ENCODE measurements at regions of chr5 and their contacts with region 1.

Region 1: GRCh38 chr5:148810823-148811222 is 15.6 kb upstream of the ADRB2 start:
- DNase-seq: no peak
- ATAC-seq: no peak
- H3K4me3 ChIP-seq: no peak overlapping the region
- H3K4me3 Mint-ChIP-seq: peak overlapping the region; percentile 80
- H3K27ac ChIP-seq: no peak overlapping the region
- H3K27ac Mint-ChIP-seq: peak overlapping the region; percentile 75
- H3K4me1 ChIP-seq: peaks cover 27% of the 10 kb centered on the region
- H3K4me1 Mint-ChIP-seq: peaks cover 47% of the 10 kb centered on the region
- H3K27me3 ChIP-seq: no peaks in the 10 kb centered on the region
- H3K27me3 Mint-ChIP-seq: no peaks in the 10 kb centered on the region
- CTCF ChIP-seq: no peak

Region 2: DNA sequence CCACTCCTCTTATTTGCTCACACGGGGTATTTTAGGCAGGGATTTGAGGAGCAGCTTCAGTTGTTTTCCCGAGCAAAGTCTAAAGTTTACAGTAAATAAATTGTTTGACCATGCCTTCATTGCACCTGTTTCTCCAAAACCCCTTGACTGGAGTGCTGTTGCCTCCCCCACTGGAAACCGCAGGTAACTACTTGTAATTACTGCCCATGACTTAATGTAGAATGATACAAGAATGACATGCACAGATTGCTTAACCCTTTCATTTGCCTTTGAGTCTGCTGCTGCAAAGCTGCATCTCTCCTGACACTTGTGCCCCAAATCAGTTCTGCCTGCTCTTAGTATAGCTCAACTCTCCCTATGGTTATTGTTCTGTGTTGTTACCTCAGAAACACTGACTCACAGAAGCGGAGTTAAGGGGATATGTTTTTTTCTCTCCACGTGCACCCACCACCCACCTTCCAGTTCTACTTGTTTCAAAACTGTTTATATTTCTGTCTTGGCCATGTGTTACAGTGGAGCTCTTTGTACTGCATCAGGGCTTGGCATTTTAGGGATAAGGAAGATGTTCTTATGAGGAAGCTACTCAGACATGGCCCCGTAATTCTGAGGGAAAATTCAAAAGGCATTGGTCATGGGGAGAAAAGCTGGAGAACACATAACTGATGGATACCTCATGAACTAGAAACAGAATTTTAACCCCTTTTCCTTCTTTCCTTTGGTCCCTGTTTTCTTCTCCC is 17.9 kb after region 1 on chr5:
- CTCF ChIA-PET with region 1: no interaction called
- POLR2A ChIA-PET with region 1: no interaction called
- intact Hi-C with region 1: no loop called
- DNase-seq: peak in 3 of 14 experiments; percentile 45 to 60 (median 53)
- ATAC-seq: no peak
- H3K4me3 ChIP-seq: peak overlapping the region; percentile 88
- H3K4me3 Mint-ChIP-seq: peak overlapping the region; percentile 62
- H3K27ac ChIP-seq: no peak overlapping the region
- H3K27ac Mint-ChIP-seq: peak overlapping the region; percentile 16
- H3K4me1 ChIP-seq: peaks cover 29% of the 10 kb centered on the region
- H3K4me1 Mint-ChIP-seq: peaks cover 30% of the 10 kb centered on the region
- H3K27me3 ChIP-seq: no peaks in the 10 kb centered on the region
- H3K27me3 Mint-ChIP-seq: peaks cover 13% of the 10 kb centered on the region
- CTCF ChIP-seq: no peak

Region 3: GRCh38 chr5:149357370-149358293 is 546.8 kb after region 1 on chr5 and contains the start of gene PCYOX1L:
- CTCF ChIA-PET with region 1: no interaction called
- POLR2A ChIA-PET with region 1: no interaction called
- intact Hi-C with region 1: loop called in 1 of 2 experiments (anchors 10 kb)
- DNase-seq: peak; percentile 85 to 98 (median 96)
- ATAC-seq: peak; percentile 96
- H3K4me3 ChIP-seq: peak within 1 kb of the TSS; percentile 67
- H3K4me3 Mint-ChIP-seq: peak within 1 kb of the TSS; percentile 94
- H3K27ac ChIP-seq: peak within 1 kb of the TSS; percentile 67 to 82
- H3K27ac Mint-ChIP-seq: peak within 1 kb of the TSS; percentile 91
- H3K4me1 ChIP-seq: peaks cover 47% of the 10 kb centered on the region
- H3K4me1 Mint-ChIP-seq: peaks cover 71% of the 10 kb centered on the region
- H3K27me3 ChIP-seq: no peaks in the 10 kb centered on the region
- H3K27me3 Mint-ChIP-seq: no peaks in the 10 kb centered on the region
- CTCF ChIP-seq: no peak
- total RNA-seq, gene PCYOX1L: 22.9 to 24.8 TPM

Region 4: DNA sequence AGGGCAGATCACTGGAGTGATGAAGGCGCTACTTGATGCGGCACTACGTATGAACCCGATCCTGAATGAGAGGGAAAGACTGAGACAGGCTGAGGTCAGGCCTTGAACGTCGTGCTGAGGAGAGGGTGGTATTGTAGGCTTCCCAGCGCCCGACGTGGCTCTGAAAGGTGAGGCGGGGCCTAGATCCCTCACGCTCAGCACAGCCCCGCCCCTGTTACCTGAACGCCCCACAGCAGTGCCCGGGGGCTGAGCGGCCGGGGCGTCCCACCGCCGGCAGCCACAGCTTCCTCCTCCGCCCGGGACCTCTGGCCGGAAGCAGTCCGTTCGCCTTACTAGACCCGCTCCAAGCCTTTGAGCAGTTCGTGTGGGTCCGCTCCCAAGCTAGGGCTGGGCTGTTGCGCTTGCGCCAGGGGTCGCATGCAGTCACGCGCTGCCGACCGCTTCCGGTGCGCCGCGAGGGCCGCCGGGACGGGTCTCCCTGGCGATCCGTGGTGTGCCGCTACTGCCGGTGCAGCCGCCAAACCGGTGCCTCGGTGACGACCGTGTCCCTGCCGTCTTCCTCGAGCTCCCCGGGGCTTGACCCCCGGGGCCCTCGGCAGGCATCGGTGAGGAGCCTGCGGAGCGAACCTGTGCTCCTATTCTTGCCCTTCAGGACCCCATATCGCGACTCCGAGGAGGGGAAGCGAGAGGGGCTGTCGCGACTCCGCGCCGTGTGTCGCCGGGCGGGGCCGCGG is 1189.6 kb after region 1 on chr5 and contains the starts of genes HMGXB3 and TIGD6:
- CTCF ChIA-PET with region 1: no interaction called
- POLR2A ChIA-PET with region 1: no interaction called
- intact Hi-C with region 1: no loop called
- DNase-seq: peak; percentile 65 to 94 (median 76)
- ATAC-seq: peak; percentile 82
- H3K4me3 ChIP-seq: peak within 1 kb of the TSS; percentile 70
- H3K4me3 Mint-ChIP-seq: peak within 1 kb of the TSS; percentile 96
- H3K27ac ChIP-seq: peak within 1 kb of the TSS; percentile 72 to 79
- H3K27ac Mint-ChIP-seq: peak within 1 kb of the TSS; percentile 95
- H3K4me1 ChIP-seq: peaks cover 34% of the 10 kb centered on the region
- H3K4me1 Mint-ChIP-seq: peaks cover 38% of the 10 kb centered on the region
- H3K27me3 ChIP-seq: no peaks in the 10 kb centered on the region
- H3K27me3 Mint-ChIP-seq: no peaks in the 10 kb centered on the region
- CTCF ChIP-seq: no peak
- total RNA-seq, gene HMGXB3: 27.4 to 29.3 TPM
- total RNA-seq, gene TIGD6: 1.0 to 1.4 TPM

Measured in CD4-positive, alpha-beta T cell (primary cell).